GM12878 (cell line): ENCODE measurements at regions of chr10 and their contacts with region 1.

Region 1: DNA sequence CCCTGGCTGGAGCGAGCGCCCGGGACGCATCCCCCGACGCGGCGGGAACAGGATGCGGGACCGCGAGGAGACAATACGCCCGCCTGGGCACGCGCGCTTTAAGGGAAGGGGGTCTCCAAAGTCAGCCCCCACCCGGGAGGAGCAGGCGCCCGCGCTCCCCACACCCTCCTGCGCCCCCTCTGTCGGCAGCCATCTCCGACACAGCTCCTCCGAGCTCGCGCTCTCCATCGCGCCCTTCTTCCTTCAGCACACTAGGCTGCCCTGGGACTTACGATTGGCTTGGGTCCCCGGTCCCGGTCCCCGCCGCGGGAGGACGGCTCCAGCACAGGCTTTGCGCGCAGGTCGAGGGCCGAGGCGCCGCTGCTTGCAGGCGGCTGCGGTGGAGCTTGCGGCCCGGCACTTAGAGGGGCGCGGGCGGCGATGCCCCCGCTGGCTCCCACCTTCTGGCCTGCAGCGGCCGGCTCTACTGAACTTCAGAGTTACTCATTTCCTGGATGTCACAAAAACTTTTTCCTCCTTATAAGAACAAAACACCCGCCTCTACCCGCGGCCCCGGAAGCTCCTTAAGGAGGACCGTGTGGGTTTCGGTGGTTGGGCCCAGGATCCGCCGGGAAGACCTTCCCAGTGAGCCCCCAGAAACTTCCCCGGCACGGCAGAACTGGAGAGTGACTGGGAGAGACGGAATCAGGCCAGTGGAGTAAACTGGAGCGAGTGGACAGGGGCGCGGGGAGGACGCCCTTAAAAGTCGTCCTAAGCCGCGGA is at the start of gene ITPRIP:
- DNase-seq: no peak
- ATAC-seq: peak; percentile 79
- H3K4me3 ChIP-seq: peak within 1 kb of the TSS; percentile 94
- H3K27ac ChIP-seq: peak within 1 kb of the TSS; percentile 96
- H3K4me1 ChIP-seq: peaks cover 20% of the 10 kb centered on the region
- H3K27me3 ChIP-seq: no peaks in the 10 kb centered on the region
- CTCF ChIP-seq: peak; percentile 15 to 26 (median 18); a peak in 4 of 6 replicates
- EP300 ChIP-seq: 0 out of 4 replicates have a peak, but pooled peaks of 1 of the 2 experiments have one; percentile 14
- POLR2A ChIP-seq: peak; percentile 91
- RAD21 ChIP-seq: no peak
- polyA plus RNA-seq, gene ITPRIP: 0.82 to 1.2 TPM

Region 2: GRCh38 chr10:103696411-103697145 is 641.6 kb before region 1 on chr10:
- CTCF ChIA-PET with region 1: no interaction called
- POLR2A ChIA-PET with region 1: no interaction called
- RAD21 ChIA-PET with region 1: no interaction called
- SMC1A ChIA-PET with region 1: no interaction called
- in situ Hi-C with region 1: no loop called
- intact Hi-C with region 1: loop called (anchors 10 kb)
- DNase-seq: no peak
- ATAC-seq: peak; percentile 61
- H3K4me3 ChIP-seq: no peak overlapping the region
- H3K27ac ChIP-seq: peak overlapping the region; percentile 54
- H3K4me1 ChIP-seq: peaks cover 29% of the 10 kb centered on the region
- H3K27me3 ChIP-seq: no peaks in the 10 kb centered on the region
- CTCF ChIP-seq: peak; percentile 33 to 50 (median 44); a peak in 5 of 6 replicates
- EP300 ChIP-seq: no peak
- POLR2A ChIP-seq: peak; percentile 55; the same call in 1 of the 2 replicates
- RAD21 ChIP-seq: no peak

Region 3: GRCh38 chr10:103918053-103918846 is 419.9 kb before region 1 on chr10 and contains the start of gene STN1:
- CTCF ChIA-PET with region 1: no interaction called
- POLR2A ChIA-PET with region 1: no interaction called
- RAD21 ChIA-PET with region 1: no interaction called
- SMC1A ChIA-PET with region 1: no interaction called
- in situ Hi-C with region 1: no loop called
- intact Hi-C with region 1: loop called (anchors 10 kb)
- DNase-seq: peak; percentile 77
- ATAC-seq: peak; percentile 96
- H3K4me3 ChIP-seq: peak within 1 kb of the TSS; percentile 83
- H3K27ac ChIP-seq: peak within 1 kb of the TSS; percentile 83
- H3K4me1 ChIP-seq: peaks cover 12% of the 10 kb centered on the region
- H3K27me3 ChIP-seq: no peaks in the 10 kb centered on the region
- CTCF ChIP-seq: 0 out of 6 replicates have a peak, but pooled peaks of 1 of the 3 experiments have one; percentile 3
- EP300 ChIP-seq: 0 out of 4 replicates have a peak, but pooled peaks of 1 of the 2 experiments have one; percentile 14
- POLR2A ChIP-seq: peak; percentile 85
- RAD21 ChIP-seq: no peak
- polyA plus RNA-seq, gene STN1: 26.5 to 27.8 TPM

Region 4: GRCh38 chr10:104322416-104322782 is 15.8 kb before region 1 on chr10:
- CTCF ChIA-PET with region 1: interaction called, 4 read pairs
- POLR2A ChIA-PET with region 1: interaction called, 6 read pairs
- RAD21 ChIA-PET with region 1: interaction called, 15 read pairs
- SMC1A ChIA-PET with region 1: interaction called, 12 read pairs
- in situ Hi-C with region 1: no loop called
- intact Hi-C with region 1: no loop called
- DNase-seq: no peak
- ATAC-seq: peak; percentile 66
- H3K4me3 ChIP-seq: no peak overlapping the region; the same call in 1 of the 2 replicates
- H3K27ac ChIP-seq: no peak overlapping the region; the same call in 1 of the 2 replicates
- H3K4me1 ChIP-seq: peaks cover 30% of the 10 kb centered on the region
- H3K27me3 ChIP-seq: no peaks in the 10 kb centered on the region
- CTCF ChIP-seq: no peak
- EP300 ChIP-seq: no peak
- POLR2A ChIP-seq: no peak
- RAD21 ChIP-seq: no peak